Activated CD4-positive, alpha-beta T cell treated with anti-CD3 and anti-CD28 coated beads for 36 hours (primary cell): ENCODE measurements at regions of chr16 and their contacts with region 1.

Region 1: GRCh38 chr16:4307215-4308037 is 8.4 kb upstream of the GLIS2 start:
- DNase-seq: peak; percentile 98
- ATAC-seq: peak; percentile 92
- H3K4me3 Mint-ChIP-seq: peak overlapping the region; percentile 96
- H3K27ac Mint-ChIP-seq: peak overlapping the region; percentile 99
- H3K4me1 Mint-ChIP-seq: peaks cover 30% of the 10 kb centered on the region
- H3K27me3 Mint-ChIP-seq: no peaks in the 10 kb centered on the region

Region 2: DNA sequence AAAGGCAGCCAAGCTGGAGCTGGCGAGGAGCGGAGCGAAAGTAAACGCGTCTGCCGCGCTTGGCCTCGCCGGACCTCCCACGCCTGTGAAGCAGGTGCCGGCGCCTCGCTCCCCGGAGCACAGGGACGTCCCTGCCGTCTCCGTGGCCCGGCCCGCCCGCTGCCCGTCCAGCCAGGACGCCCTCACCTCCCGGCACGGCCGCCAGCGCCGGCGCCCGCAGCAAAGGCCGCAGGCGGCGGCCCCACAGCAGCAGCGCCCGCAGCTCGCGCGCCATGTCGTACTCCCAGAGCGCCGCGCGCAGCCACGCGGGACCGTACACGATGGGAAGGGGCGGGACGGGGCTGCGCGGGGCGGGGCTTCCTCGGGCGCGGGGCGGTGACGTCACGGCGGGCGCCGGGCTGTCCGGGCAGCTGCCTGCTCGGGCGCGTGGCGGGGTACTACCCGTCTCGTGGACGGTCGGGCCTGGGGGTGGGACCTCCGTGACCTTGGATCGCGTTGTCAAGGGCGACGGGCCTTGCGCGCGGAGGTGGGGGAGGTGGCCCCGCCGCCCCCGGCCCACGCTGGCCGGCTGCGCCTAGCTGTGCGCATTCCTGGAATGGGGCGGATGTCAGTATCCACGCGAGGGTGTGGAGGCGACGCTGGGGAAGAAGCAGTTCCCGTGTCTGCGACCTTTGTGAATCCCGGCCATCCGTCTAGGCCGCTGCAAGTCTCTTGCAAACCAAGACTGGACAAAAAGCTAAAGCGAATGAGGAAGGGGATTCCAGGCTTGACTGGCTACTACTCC is 590.0 kb before region 1 on chr16 and contains the start of gene TRAP1:
- CTCF ChIA-PET with region 1: no interaction called
- POLR2A ChIA-PET with region 1: no interaction called
- intact Hi-C with region 1: loop called in 1 of 2 experiments (anchors 1 kb)
- DNase-seq: peak; percentile 95
- ATAC-seq: peak; percentile 95
- H3K4me3 Mint-ChIP-seq: peak within 1 kb of the TSS; percentile 89
- H3K27ac Mint-ChIP-seq: peak within 1 kb of the TSS; percentile 92
- H3K4me1 Mint-ChIP-seq: peaks cover 44% of the 10 kb centered on the region
- H3K27me3 Mint-ChIP-seq: no peaks in the 10 kb centered on the region
- total RNA-seq, gene TRAP1: 306 to 360 TPM

Region 3: DNA sequence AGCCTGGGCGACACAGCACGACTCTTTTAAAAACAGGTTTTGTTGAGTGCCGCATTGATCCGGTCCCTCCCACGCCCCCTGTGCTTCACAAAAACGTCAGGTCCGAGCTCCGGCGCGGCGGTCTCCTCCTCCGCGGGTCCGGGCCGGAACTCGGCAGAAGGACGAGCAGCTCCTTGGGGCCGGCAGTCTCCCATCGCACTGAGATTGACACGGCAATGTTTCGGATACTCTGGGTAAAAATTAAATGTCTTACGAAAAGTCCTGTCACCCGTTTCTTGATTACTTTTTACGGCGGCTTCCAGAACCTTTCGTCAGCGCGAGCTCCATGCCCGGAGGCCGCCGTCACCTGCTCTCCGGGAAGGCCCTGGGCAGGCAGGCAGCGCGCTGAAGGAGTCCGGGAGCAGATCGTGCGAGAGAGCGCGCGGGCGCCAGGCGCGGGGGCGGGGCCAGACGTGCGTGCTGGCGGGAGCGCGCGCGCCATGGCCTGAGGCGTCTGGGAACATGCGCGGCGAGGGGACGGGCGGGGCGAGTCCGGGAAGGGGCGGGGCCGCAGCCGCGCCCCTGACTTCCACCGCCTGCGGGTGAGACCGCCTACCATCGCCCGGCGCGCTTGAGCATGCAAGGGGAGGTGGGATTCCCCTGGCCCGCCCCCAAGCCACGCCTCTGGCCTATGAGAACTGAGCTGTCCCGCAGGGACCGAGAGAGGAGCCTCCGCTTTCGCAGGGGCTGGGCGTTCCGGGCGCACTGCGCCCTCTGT is 53.9 kb before region 1 on chr16:
- CTCF ChIA-PET with region 1: interaction called, 40 read pairs
- POLR2A ChIA-PET with region 1: interaction called, 12 read pairs
- intact Hi-C with region 1: loop called (anchors 1 to 2 kb)
- DNase-seq: peak; percentile 100
- ATAC-seq: peak; percentile 98
- H3K4me3 Mint-ChIP-seq: peak overlapping the region; percentile 92
- H3K27ac Mint-ChIP-seq: peak overlapping the region; percentile 96
- H3K4me1 Mint-ChIP-seq: peaks cover 3% of the 10 kb centered on the region
- H3K27me3 Mint-ChIP-seq: no peaks in the 10 kb centered on the region

Region 4: GRCh38 chr16:4350787-4351659 is 43.6 kb after region 1 on chr16 and contains the start of gene PAM16:
- CTCF ChIA-PET with region 1: interaction called, 3 read pairs
- POLR2A ChIA-PET with region 1: interaction called, 8 read pairs
- intact Hi-C with region 1: loop called (anchors 1 kb)
- DNase-seq: peak; percentile 99
- ATAC-seq: peak; percentile 96
- H3K4me3 Mint-ChIP-seq: peak within 1 kb of the TSS; percentile 89
- H3K27ac Mint-ChIP-seq: peak within 1 kb of the TSS; percentile 88
- H3K4me1 Mint-ChIP-seq: peaks cover 20% of the 10 kb centered on the region
- H3K27me3 Mint-ChIP-seq: no peaks in the 10 kb centered on the region
- total RNA-seq, gene PAM16: 62.8 to 67.8 TPM

Region 5: DNA sequence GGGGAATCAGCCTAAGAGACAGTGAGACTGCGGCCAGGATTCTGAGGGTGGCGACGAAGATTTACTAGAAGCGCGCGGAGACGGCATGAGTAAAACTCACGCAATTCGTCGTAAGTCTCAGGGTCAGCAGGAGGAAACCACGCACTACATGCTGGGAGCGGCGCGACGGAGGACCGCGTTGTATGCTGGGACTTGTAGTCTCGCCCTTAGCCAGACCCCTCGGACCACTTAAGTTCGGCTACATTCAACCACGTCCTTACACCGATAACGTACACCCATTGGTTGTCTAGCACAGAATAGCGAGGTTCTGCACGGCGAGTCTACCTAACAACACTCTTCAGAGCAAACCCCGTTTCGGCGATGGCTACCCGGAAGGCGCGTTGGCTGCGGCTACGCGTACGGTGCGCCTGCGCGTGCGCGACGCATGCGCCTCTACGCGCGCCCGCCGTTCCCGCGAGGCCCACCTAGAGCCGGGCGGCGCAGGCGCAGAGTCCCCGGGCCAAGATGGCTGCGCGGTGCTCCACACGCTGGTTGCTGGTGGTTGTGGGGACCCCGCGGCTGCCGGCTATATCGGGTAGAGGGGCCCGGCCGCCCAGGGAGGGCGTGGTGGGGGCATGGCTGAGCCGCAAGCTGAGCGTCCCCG is 118.1 kb after region 1 on chr16 and contains the start of gene DNAJA3:
- CTCF ChIA-PET with region 1: no interaction called
- POLR2A ChIA-PET with region 1: no interaction called
- intact Hi-C with region 1: loop called in 1 of 2 experiments (anchors 1 kb)
- DNase-seq: peak; percentile 96
- ATAC-seq: peak; percentile 93
- H3K4me3 Mint-ChIP-seq: peak within 1 kb of the TSS; percentile 95
- H3K27ac Mint-ChIP-seq: peak within 1 kb of the TSS; percentile 98
- H3K4me1 Mint-ChIP-seq: peaks cover 27% of the 10 kb centered on the region
- H3K27me3 Mint-ChIP-seq: no peaks in the 10 kb centered on the region
- total RNA-seq, gene DNAJA3: 93.9 to 102 TPM

Region 6: GRCh38 chr16:4624015-4624826 is 316.8 kb after region 1 on chr16 and contains the start of gene MGRN1:
- CTCF ChIA-PET with region 1: no interaction called
- POLR2A ChIA-PET with region 1: no interaction called
- intact Hi-C with region 1: loop called in 1 of 2 experiments (anchors 2 kb)
- DNase-seq: peak; percentile 96
- ATAC-seq: peak; percentile 89
- H3K4me3 Mint-ChIP-seq: peak within 1 kb of the TSS; percentile 99
- H3K27ac Mint-ChIP-seq: peak within 1 kb of the TSS; percentile 100
- H3K4me1 Mint-ChIP-seq: peaks cover 38% of the 10 kb centered on the region
- H3K27me3 Mint-ChIP-seq: no peaks in the 10 kb centered on the region
- total RNA-seq, gene MGRN1: 65.0 to 75.4 TPM

Region 7: DNA sequence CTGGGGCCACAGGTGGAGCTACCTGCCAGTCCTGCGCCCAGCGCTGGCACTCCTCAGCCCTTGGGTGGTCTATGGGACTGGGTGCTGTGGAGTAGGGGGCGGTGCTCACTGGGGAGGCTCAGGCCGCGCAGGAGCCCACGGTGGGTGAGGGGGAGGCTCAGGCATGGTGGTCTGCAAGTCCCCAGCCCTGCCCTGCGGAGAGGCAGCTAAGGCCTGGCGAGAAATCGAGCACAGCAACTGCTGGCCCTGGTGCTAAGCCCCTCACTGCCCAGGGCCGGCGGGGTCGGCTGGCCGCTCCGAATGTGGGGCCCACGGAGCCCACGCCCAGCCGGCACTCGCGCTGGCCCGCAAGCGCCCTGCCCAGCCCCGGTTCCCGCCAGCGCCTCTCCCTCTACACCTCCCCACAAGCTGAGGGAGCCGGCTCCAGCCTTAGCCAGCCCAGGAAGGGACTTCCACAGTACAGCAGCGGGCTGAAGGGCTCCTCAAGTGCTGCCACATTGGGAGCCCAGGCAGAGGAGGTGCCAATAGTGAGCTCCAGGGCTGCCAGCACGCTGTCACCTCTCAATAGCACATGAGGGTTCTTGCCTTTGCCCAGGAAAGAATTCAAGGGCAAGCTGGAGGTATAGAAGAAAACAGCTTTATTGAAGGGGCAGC is 801.2 kb after region 1 on chr16:
- CTCF ChIA-PET with region 1: no interaction called
- POLR2A ChIA-PET with region 1: no interaction called
- intact Hi-C with region 1: no loop called
- DNase-seq: no peak
- ATAC-seq: no peak
- H3K4me3 Mint-ChIP-seq: no peak overlapping the region
- H3K27ac Mint-ChIP-seq: no peak overlapping the region
- H3K4me1 Mint-ChIP-seq: no peaks in the 10 kb centered on the region
- H3K27me3 Mint-ChIP-seq: no peaks in the 10 kb centered on the region